ENCODE measurements at regions of chr1 and their contacts with region 1.

Region 1: DNA sequence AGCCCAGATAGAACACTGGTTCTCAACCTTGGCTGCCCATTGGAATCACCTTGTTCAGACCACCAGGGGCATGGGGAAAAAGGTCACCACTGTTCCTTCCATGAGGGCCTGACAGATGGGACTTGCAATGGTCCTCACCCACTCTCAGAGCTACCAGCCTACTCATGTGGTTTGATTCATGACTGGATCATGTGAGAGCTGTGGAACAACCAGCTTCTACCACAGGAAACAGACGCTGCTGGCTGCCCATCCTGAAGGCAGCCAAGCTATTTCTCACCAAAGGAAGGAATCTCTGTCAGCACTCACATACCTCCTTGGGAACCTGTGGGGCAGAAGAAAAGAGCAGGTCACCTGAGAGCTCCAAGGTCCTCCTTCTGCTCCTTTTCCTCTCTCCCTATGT is 53.6 kb downstream of the CAPN8 start:
- DNase-seq: no peak
- H3K4me3 ChIP-seq: no peak overlapping the region
- CTCF ChIP-seq: no peak

Region 2: DNA sequence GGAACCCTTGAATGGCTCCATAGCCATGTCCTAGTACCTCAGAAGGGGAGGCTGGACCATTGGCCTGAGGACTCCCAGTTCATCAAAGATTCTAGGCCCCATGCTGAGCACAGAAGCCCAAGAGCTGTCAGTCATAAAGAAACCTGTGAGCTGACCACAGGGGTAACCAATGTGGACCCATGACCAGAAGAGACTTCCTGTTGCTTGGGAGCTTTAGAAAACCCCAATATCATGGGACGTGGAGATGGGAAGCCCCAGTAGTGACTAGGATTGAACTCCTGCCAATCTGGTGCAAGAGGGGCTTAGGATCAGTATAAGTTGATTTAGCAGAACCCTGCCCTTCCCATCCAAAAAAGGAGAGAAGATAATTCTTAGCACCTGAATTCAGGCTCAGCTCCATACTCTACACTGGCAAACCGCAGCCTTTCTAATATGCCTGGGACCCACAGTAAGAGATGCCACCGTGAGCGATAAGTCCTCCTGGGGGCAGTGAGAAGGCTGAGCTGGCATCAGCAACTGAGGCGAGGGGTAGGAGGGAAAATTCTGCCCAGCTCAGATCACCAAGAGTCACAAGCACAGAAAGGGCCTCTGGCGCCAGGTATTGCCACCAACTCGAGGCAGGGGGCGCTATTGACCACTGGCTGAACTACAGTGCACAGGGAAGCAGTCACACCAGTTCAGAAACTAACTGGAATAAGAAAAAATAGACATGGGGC is 55.4 kb before region 1 on chr1:
- CTCF ChIA-PET with region 1: interaction called, 13 read pairs
- POLR2A ChIA-PET with region 1: no interaction called
- DNase-seq: no peak
- H3K4me3 ChIP-seq: no peak overlapping the region
- CTCF ChIP-seq: peak; percentile 33

Region 3: DNA sequence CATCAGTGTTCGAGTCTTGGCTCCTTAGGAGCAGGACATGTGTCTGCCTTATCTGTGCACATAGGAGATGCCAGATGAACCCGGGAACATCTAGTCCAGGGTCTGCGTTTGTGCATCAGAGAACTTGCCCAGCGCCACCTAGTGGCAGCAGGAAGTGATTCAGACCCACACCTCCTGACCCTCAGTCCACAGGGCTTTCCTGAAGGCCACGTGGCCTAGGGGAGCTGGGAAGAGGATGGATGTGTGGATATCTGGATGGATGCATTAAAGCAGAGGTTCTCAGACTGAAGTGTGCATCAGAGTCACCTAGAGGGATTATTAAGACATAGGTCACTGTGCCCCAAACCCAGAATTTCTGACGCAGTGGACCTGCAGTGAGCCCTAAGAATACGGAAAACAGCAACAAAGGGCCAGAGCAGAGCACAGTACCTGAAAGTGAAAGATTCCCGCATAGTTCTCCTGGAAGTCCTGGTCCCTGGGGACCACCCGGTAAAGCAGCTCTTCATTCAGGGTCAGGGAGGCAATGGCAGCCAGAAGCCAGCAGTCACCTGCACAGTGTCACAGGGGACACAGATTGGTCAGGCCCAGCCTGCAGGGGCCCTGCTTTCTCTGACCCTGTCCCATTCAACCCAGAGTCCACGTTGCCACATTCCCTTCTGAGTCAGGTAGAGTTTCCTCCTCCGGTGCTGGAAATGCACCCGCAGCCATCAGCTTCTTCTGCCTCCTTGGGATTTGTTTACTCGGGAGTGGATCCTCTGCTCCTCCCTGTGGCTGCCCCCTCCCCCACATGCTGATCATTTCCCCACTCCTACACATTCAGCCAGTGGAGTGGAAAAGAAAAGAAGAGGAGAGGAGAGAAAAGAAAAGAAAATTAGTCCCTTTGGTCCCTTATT is 16.5 kb after region 1 on chr1:
- CTCF ChIA-PET with region 1: interaction called, 28 read pairs
- POLR2A ChIA-PET with region 1: no interaction called
- DNase-seq: no peak
- H3K4me3 ChIP-seq: no peak overlapping the region
- CTCF ChIP-seq: peak; percentile 61

Measured in AG04449 (cell line).